ENCODE measurements at regions of chr6 and their contacts with region 1.

Region 1: DNA sequence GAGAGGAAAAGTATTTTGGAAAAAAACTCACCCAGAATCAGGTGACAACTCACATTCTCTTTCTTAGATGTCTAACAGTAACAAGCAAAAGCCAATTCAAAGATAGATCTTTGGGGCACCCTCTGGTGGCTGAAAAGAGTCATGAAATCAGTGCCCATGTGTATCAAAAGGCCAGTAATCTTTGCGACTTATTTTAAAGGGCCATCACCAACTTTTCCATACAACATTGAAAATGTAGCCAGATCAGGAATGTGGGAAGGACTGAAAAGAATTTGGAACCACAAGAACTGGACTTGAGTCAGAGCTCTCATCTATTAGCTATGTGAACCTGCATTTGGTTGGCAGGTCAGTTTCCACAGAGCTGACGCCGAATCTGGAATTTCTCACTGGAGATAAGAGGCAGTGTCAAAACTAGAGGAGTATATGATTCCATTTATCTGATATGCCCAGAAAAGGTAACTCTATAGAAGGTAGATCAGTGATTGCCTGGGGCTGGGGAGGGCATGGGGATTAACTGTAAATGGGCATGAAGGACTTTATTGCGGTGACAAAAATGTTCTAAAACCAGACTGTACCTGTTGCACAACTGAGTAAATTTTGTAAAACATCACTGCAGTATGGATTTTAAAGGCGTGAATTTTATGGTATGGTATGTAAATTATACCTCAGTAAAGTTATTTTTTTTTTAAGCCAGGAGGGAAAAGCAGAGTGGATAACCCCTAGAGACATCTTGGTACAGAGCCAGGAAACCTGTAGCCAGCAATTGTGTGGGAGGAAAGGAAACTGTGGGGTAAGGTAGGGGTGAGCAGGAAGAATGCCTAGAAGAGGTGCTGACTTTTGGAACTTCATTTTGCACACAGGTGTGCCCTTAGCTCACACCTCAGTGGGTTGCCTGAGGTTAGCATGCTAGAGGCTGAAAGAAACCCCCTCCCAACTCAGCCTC is 117.1 kb upstream of the ASF1A start:
- DNase-seq: peak; percentile 30 to 82 (median 58)
- ATAC-seq: peak; percentile 82 to 89 (median 85)
- H3K4me3 ChIP-seq: no peak overlapping the region
- H3K4me3 Mint-ChIP-seq: peak overlapping the region in 1 of 3 donors; percentile 44
- H3K27ac ChIP-seq: no peak overlapping the region
- H3K27ac Mint-ChIP-seq: peak overlapping the region; percentile 65 to 71
- H3K4me1 ChIP-seq: peaks cover 9% of the 10 kb centered on the region in 2 experiments
- H3K4me1 Mint-ChIP-seq: peaks cover 20 to 24% (median 24%) of the 10 kb centered on the region in 3 donors
- H3K27me3 ChIP-seq: no peaks in the 10 kb centered on the region
- H3K27me3 Mint-ChIP-seq: no peaks in the 10 kb centered on the region

Region 2: GRCh38 chr6:118697554-118697953 is 79.3 kb before region 1 on chr6:
- CTCF ChIA-PET with region 1: interaction called, 12 to 15 read pairs
- POLR2A ChIA-PET with region 1: no interaction called
- DNase-seq: peak in 8 of 35 experiments; percentile 7 to 44 (median 16)
- ATAC-seq: peak in 1 of 4 experiments; percentile 43
- H3K4me3 ChIP-seq: no peak overlapping the region
- H3K4me3 Mint-ChIP-seq: no peak overlapping the region
- H3K27ac ChIP-seq: no peak overlapping the region
- H3K27ac Mint-ChIP-seq: no peak overlapping the region
- H3K4me1 ChIP-seq: peaks cover 8 to 11% of the 10 kb centered on the region in 2 experiments
- H3K4me1 Mint-ChIP-seq: peaks cover 76 to 88% (median 88%) of the 10 kb centered on the region in 3 donors
- H3K27me3 ChIP-seq: no peaks in the 10 kb centered on the region
- H3K27me3 Mint-ChIP-seq: no peaks in the 10 kb centered on the region

Region 3: DNA sequence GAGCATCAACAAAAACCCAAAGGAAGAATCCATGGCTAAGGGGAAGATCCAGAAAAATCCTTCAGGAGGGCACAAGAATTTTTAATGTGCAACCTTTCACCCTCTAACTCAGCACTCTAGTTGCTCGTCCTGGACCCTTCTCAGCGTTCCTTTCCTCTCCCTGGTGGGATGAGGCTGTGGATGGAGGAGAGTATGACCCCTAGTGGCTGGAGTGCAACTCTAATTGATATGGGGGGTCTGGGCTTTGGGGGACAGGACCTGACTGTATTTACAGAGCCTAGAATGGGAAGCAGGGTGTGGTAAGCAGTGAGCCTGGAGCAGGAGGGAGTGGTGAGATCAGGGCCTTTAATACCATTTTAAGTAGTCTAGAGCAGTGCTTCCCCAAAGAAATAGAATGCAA is 41.6 kb before region 1 on chr6:
- CTCF ChIA-PET with region 1: no interaction called
- POLR2A ChIA-PET with region 1: no interaction called
- DNase-seq: peak in 1 of 35 experiments; percentile 53
- ATAC-seq: peak in 2 of 4 experiments; percentile 42 to 45
- H3K4me3 ChIP-seq: no peak overlapping the region
- H3K4me3 Mint-ChIP-seq: no peak overlapping the region
- H3K27ac ChIP-seq: no peak overlapping the region
- H3K27ac Mint-ChIP-seq: no peak overlapping the region
- H3K4me1 ChIP-seq: peaks cover 0 to 4% of the 10 kb centered on the region in 2 experiments
- H3K4me1 Mint-ChIP-seq: peaks cover 14 to 31% (median 24%) of the 10 kb centered on the region in 3 donors
- H3K27me3 ChIP-seq: no peaks in the 10 kb centered on the region
- H3K27me3 Mint-ChIP-seq: no peaks in the 10 kb centered on the region

Region 4: DNA sequence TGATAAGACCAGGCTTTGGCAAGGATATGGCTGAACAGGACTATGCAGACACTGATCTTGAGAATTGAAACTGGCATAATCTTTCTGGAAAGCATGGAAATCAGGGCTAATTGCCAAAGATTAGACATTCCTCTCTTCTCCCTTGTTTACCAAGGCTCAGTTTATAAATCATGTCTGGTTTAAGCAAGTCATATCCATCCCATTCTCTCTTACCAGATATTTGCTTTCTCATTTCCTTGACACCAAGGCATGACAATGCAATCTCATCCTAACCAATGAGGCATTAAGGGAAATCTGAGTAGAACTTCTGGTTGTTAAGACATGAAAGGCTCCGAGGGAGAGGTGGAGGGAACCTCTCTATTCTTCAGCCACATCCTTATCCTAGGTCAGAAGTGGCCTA is 15.2 kb before region 1 on chr6:
- CTCF ChIA-PET with region 1: interaction called in 1 of 2 experiments, 11 read pairs
- POLR2A ChIA-PET with region 1: no interaction called
- DNase-seq: no peak
- ATAC-seq: no peak
- H3K4me3 ChIP-seq: no peak overlapping the region
- H3K4me3 Mint-ChIP-seq: no peak overlapping the region
- H3K27ac ChIP-seq: no peak overlapping the region
- H3K27ac Mint-ChIP-seq: no peak overlapping the region
- H3K4me1 ChIP-seq: peaks cover 2 to 3% of the 10 kb centered on the region in 2 experiments
- H3K4me1 Mint-ChIP-seq: peaks cover 4 to 18% (median 7%) of the 10 kb centered on the region in 3 donors
- H3K27me3 ChIP-seq: no peaks in the 10 kb centered on the region
- H3K27me3 Mint-ChIP-seq: no peaks in the 10 kb centered on the region